ENCODE measurements at regions of chr9 and their contacts with region 1.

Region 1: GRCh38 chr9:20941174-20941690 is 90.2 kb downstream of the HACD4 start:
- DNase-seq: peak; percentile 17 to 85
- ATAC-seq: peak; percentile 84 to 94 (median 90)
- H3K4me3 ChIP-seq: no peak overlapping the region
- H3K4me3 Mint-ChIP-seq: no peak overlapping the region
- H3K27ac ChIP-seq: no peak overlapping the region
- H3K27ac Mint-ChIP-seq: no peak overlapping the region
- H3K4me1 ChIP-seq: no peaks in the 10 kb centered on the region
- H3K4me1 Mint-ChIP-seq: no peaks in the 10 kb centered on the region
- H3K27me3 ChIP-seq: no peaks in the 10 kb centered on the region
- H3K27me3 Mint-ChIP-seq: no peaks in the 10 kb centered on the region
- CTCF ChIP-seq: peak; percentile 88

Region 2: DNA sequence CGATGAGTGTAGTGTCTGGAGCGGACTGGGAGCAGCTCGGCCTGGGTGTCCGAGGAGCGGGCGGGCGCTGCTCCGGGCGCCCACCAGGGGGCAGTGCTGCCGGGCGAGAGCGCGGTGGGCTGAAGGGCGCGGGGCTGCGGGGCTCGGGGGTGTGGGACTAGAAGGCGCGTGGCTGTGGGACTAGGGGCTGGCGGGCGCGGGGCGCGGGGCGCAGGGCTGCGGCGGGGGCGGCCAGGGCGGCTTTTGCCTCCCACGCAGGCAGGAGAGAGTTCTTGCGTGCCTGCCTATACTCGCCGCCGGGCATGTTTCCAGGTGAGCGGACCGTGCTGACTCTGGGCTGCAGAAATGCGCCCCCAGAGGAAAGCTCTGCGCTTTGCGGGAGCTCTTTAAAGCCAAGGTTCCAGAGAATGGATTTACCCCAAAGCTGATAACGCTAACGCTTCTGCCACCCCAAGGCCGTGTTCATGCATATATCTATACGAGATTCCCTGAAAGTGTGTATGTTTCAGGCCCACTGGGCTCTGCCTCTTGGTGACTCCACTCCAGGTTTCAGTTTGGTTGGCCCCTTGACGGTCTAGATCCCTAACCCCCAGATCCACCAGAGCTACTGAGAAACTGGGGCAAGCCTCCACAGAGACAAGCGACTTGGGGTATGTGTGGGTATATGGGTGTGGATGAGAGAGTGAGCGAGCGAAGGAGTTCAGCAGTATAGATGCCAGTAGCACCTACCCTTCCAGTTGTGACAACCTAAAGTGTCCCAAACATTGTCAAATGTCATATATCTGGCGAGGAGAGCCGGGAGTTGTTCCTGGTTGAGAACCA is 1476.3 kb before region 1 on chr9:
- intact Hi-C with region 1: loop called (anchors 10 kb)
- DNase-seq: peak; percentile 62 to 83
- ATAC-seq: peak; percentile 90 to 95 (median 94)
- H3K4me3 ChIP-seq: no peak overlapping the region
- H3K4me3 Mint-ChIP-seq: peak overlapping the region; percentile 89
- H3K27ac ChIP-seq: no peak overlapping the region
- H3K27ac Mint-ChIP-seq: peak overlapping the region in 1 of 2 donors; percentile 62
- H3K4me1 ChIP-seq: peaks cover 10% of the 10 kb centered on the region
- H3K4me1 Mint-ChIP-seq: peaks cover 8% of the 10 kb centered on the region in 2 donors
- H3K27me3 ChIP-seq: no peaks in the 10 kb centered on the region
- H3K27me3 Mint-ChIP-seq: peaks cover 0 to 7% of the 10 kb centered on the region in 2 donors
- CTCF ChIP-seq: peak; percentile 81

Region 3: DNA sequence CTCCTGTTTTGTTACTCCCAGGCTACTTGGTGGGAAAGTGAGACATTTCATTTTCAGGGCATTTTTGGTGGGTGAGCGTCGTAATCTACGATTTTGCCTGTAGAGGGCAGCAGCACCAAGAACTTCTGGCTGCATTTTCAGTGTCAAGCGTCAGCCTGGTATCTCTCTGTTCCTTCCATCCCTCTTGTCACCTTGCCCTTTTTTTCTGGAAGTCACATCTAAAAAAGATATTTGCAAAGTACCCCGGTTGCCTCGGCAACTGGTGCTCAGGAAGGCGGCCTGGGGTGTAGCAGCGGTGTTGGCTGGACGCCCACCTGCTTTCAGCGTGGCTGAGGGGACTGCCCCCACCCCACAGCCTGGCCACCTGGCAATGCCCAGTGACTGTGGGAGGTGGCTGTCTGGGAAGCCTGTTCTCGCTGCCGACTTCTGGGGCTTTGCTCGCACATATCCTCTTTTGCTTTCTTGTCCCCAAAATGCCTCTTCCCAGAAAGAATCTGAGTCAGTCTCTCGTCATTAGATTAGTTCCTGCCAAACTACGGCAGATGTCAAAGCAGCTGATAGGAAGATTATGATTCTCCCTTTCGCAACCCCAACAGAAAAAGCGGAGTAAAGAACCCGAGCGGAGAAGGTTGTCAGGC is 1447.9 kb before region 1 on chr9:
- intact Hi-C with region 1: loop called (anchors 10 kb)
- DNase-seq: peak in 1 of 2 donors; percentile 68
- ATAC-seq: peak; percentile 58 to 81 (median 61)
- H3K4me3 ChIP-seq: no peak overlapping the region
- H3K4me3 Mint-ChIP-seq: no peak overlapping the region
- H3K27ac ChIP-seq: no peak overlapping the region
- H3K27ac Mint-ChIP-seq: no peak overlapping the region
- H3K4me1 ChIP-seq: peaks cover 4% of the 10 kb centered on the region
- H3K4me1 Mint-ChIP-seq: peaks cover 9 to 10% of the 10 kb centered on the region in 2 donors
- H3K27me3 ChIP-seq: no peaks in the 10 kb centered on the region
- H3K27me3 Mint-ChIP-seq: peaks cover 0 to 26% of the 10 kb centered on the region in 2 donors
- CTCF ChIP-seq: peak; percentile 62

Region 4: GRCh38 chr9:19925817-19926503 is 1015.3 kb before region 1 on chr9:
- intact Hi-C with region 1: loop called (anchors 1 kb)
- DNase-seq: peak; percentile 54 to 90
- ATAC-seq: peak; percentile 93 to 100 (median 99)
- H3K4me3 ChIP-seq: no peak overlapping the region
- H3K4me3 Mint-ChIP-seq: peak overlapping the region; percentile 60
- H3K27ac ChIP-seq: no peak overlapping the region
- H3K27ac Mint-ChIP-seq: no peak overlapping the region
- H3K4me1 ChIP-seq: peaks cover 6% of the 10 kb centered on the region
- H3K4me1 Mint-ChIP-seq: peaks cover 8% of the 10 kb centered on the region in 2 donors
- H3K27me3 ChIP-seq: no peaks in the 10 kb centered on the region
- H3K27me3 Mint-ChIP-seq: peaks cover 8 to 51% of the 10 kb centered on the region in 2 donors
- CTCF ChIP-seq: peak; percentile 96

Region 5: GRCh38 chr9:20356403-20357035 is 584.7 kb before region 1 on chr9:
- intact Hi-C with region 1: loop called (anchors 5 kb)
- DNase-seq: peak in 1 of 2 donors; percentile 76
- ATAC-seq: peak in 1 of 3 donors; percentile 57
- H3K4me3 ChIP-seq: no peak overlapping the region
- H3K4me3 Mint-ChIP-seq: no peak overlapping the region
- H3K27ac ChIP-seq: no peak overlapping the region
- H3K27ac Mint-ChIP-seq: no peak overlapping the region
- H3K4me1 ChIP-seq: no peaks in the 10 kb centered on the region
- H3K4me1 Mint-ChIP-seq: no peaks in the 10 kb centered on the region
- H3K27me3 ChIP-seq: no peaks in the 10 kb centered on the region
- H3K27me3 Mint-ChIP-seq: no peaks in the 10 kb centered on the region
- CTCF ChIP-seq: no peak

Region 6: GRCh38 chr9:20771729-20772128 is 169.5 kb before region 1 on chr9:
- intact Hi-C with region 1: no loop called
- DNase-seq: no peak
- ATAC-seq: no peak
- H3K4me3 ChIP-seq: no peak overlapping the region
- H3K4me3 Mint-ChIP-seq: no peak overlapping the region
- H3K27ac ChIP-seq: no peak overlapping the region
- H3K27ac Mint-ChIP-seq: no peak overlapping the region
- H3K4me1 ChIP-seq: no peaks in the 10 kb centered on the region
- H3K4me1 Mint-ChIP-seq: no peaks in the 10 kb centered on the region
- H3K27me3 ChIP-seq: no peaks in the 10 kb centered on the region
- H3K27me3 Mint-ChIP-seq: no peaks in the 10 kb centered on the region
- CTCF ChIP-seq: no peak

Region 7: GRCh38 chr9:20884985-20885593 is 56.1 kb before region 1 on chr9:
- intact Hi-C with region 1: loop called (anchors 5 kb)
- DNase-seq: peak; percentile 34 to 76
- ATAC-seq: peak in 2 of 3 donors; percentile 60 to 64
- H3K4me3 ChIP-seq: no peak overlapping the region
- H3K4me3 Mint-ChIP-seq: no peak overlapping the region
- H3K27ac ChIP-seq: no peak overlapping the region
- H3K27ac Mint-ChIP-seq: no peak overlapping the region
- H3K4me1 ChIP-seq: no peaks in the 10 kb centered on the region
- H3K4me1 Mint-ChIP-seq: no peaks in the 10 kb centered on the region
- H3K27me3 ChIP-seq: no peaks in the 10 kb centered on the region
- H3K27me3 Mint-ChIP-seq: no peaks in the 10 kb centered on the region
- CTCF ChIP-seq: peak; percentile 79

Region 8: DNA sequence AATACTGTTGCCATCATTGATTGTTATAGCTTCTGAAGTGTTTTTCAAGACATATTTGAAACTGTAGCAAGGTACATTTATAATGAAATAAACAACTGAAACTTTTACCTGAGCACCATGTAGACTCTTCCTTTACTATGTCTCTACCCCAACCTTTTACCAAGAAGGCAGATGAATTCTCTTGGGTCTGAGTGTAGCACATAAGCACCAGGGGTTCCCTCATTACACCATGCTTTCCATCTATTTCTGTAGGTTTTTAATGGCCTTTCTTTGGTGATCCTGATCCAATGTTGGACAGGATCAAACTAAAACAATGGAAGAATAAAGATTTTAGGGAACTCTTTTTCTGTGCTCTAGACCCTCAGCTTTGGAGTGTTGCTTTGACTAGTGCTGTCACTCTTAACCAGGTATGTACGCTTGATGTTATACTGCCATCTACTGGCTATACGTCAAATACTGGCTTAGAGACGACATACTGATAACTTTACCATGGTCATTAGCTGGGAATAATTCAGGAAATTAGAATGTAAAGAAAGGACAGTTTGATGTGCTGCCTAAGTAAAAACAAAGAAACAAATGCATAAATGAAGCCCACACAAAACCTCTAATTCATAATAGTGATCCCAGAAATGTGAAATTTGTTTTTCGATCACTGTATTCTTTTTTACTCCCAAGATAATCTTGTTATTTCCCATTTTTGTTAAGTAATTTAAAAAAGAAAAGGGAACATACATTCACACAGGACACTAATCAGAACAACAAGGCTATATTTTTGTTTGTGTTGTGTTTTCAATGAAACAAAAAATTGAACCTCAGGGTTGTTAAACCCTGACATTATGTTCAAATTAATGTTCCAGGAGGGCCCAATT is 169.7 kb after region 1 on chr9:
- intact Hi-C with region 1: loop called (anchors 1 kb)
- DNase-seq: peak in 1 of 2 donors; percentile 87
- ATAC-seq: peak; percentile 92 to 97 (median 96)
- H3K4me3 ChIP-seq: no peak overlapping the region
- H3K4me3 Mint-ChIP-seq: no peak overlapping the region
- H3K27ac ChIP-seq: no peak overlapping the region
- H3K27ac Mint-ChIP-seq: no peak overlapping the region
- H3K4me1 ChIP-seq: no peaks in the 10 kb centered on the region
- H3K4me1 Mint-ChIP-seq: no peaks in the 10 kb centered on the region
- H3K27me3 ChIP-seq: no peaks in the 10 kb centered on the region
- H3K27me3 Mint-ChIP-seq: peaks cover 0 to 3% of the 10 kb centered on the region in 2 donors
- CTCF ChIP-seq: peak; percentile 98